ENCODE measurements at regions of chr17 and their contacts with region 1.

Region 1: GRCh38 chr17:19004421-19005136 is at the start of gene FAM83G:
- DNase-seq: peak; percentile 86
- ATAC-seq: peak; percentile 86 to 97 (median 94)
- H3K4me3 ChIP-seq: peak within 1 kb of the TSS; percentile 73
- H3K27ac ChIP-seq: peak within 1 kb of the TSS; percentile 53
- H3K4me1 ChIP-seq: no peaks in the 10 kb centered on the region
- H3K27me3 ChIP-seq: peaks cover 0 to 6% (median 3%) of the 10 kb centered on the region in 3 donors
- CTCF ChIP-seq: no peak
- total RNA-seq, gene FAM83G: 7.0 to 20.4 (median 9.3) TPM

Region 2: GRCh38 chr17:18981642-18982424 is 22.7 kb before region 1 on chr17:
- intact Hi-C with region 1: loop called in 1 of 2 experiments (anchors 2 kb)
- DNase-seq: no peak
- ATAC-seq: peak in 3 of 4 donors; percentile 15 to 26 (median 15)
- H3K4me3 ChIP-seq: no peak overlapping the region
- H3K27ac ChIP-seq: no peak overlapping the region
- H3K4me1 ChIP-seq: no peaks in the 10 kb centered on the region
- H3K27me3 ChIP-seq: no peaks in the 10 kb centered on the region
- CTCF ChIP-seq: no peak